T-cell (primary cell): ENCODE measurements at regions of chr16 and their contacts with region 1.

Region 1: GRCh38 chr16:56931271-56931891 is 561 bp upstream of the HERPUD1 start:
- DNase-seq: no peak
- ATAC-seq: peak in 3 of 4 experiments; percentile 8 to 14 (median 8)
- H3K4me3 ChIP-seq: peak overlapping the region; percentile 46 to 86
- H3K4me3 Mint-ChIP-seq: peak overlapping the region; percentile 96 to 98 (median 98)
- H3K27ac ChIP-seq: peak overlapping the region; percentile 92
- H3K27ac Mint-ChIP-seq: peak overlapping the region; percentile 92 to 97
- H3K4me1 ChIP-seq: peaks cover 12 to 27% of the 10 kb centered on the region in 2 experiments
- H3K4me1 Mint-ChIP-seq: peaks cover 30 to 39% (median 38%) of the 10 kb centered on the region in 3 donors
- H3K27me3 ChIP-seq: no peaks in the 10 kb centered on the region
- H3K27me3 Mint-ChIP-seq: no peaks in the 10 kb centered on the region

Region 2: DNA sequence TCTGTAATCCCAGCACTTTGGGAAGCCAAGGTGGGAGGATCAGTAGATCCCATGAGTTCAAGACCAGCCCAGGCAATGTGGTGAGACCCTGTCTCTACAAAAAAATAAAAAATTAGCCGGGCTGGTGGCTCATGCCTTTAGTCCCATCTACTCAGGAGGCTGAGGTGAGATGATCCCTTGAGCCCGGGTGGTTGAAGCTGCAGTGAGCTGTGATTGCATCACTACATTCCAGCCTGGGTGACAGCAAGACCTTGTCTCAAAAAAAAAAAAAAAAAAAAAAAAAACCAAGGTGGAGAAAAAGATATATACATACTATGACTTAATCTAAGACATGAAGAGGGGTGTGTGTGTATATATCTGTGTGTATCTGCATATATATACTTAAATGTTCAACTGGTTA is 438.3 kb before region 1 on chr16:
- CTCF ChIA-PET with region 1: no interaction called
- POLR2A ChIA-PET with region 1: interaction called in 1 of 2 experiments, 13 read pairs
- DNase-seq: no peak
- ATAC-seq: no peak
- H3K4me3 ChIP-seq: no peak overlapping the region
- H3K4me3 Mint-ChIP-seq: no peak overlapping the region
- H3K27ac ChIP-seq: no peak overlapping the region
- H3K27ac Mint-ChIP-seq: no peak overlapping the region
- H3K4me1 ChIP-seq: no peaks in the 10 kb centered on the region
- H3K4me1 Mint-ChIP-seq: no peaks in the 10 kb centered on the region
- H3K27me3 ChIP-seq: no peaks in the 10 kb centered on the region
- H3K27me3 Mint-ChIP-seq: no peaks in the 10 kb centered on the region

Region 3: GRCh38 chr16:56944954-56945839 is 13.8 kb after region 1 on chr16:
- CTCF ChIA-PET with region 1: no interaction called
- POLR2A ChIA-PET with region 1: interaction called, 6 to 13 read pairs
- DNase-seq: no peak
- ATAC-seq: no peak
- H3K4me3 ChIP-seq: no peak overlapping the region
- H3K4me3 Mint-ChIP-seq: no peak overlapping the region
- H3K27ac ChIP-seq: peak overlapping the region; percentile 2
- H3K27ac Mint-ChIP-seq: peak overlapping the region; percentile 37 to 49
- H3K4me1 ChIP-seq: peaks cover 0 to 3% of the 10 kb centered on the region in 2 experiments
- H3K4me1 Mint-ChIP-seq: peaks cover 8 to 17% (median 9%) of the 10 kb centered on the region in 3 donors
- H3K27me3 ChIP-seq: no peaks in the 10 kb centered on the region
- H3K27me3 Mint-ChIP-seq: no peaks in the 10 kb centered on the region

Region 4: DNA sequence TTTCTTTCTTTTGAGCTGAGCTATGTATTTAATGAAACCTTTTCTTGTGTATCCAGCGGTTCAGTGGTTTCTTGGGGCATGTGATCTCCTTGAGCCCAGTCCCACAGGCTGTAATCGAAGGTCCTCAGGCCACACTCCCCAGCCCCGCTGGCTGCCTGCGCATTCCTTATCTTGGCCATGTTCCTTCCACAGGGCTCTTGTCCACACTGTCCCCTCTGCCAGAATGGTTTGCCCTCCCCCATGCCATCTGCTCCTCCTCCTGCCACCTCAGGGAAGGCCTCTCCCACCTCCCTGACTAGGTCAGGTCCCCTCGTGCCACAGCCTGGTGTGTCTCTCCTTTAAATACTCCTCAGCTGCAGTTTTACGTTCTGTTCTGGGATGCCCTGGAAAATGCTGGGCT is 45.8 kb after region 1 on chr16:
- CTCF ChIA-PET with region 1: no interaction called
- POLR2A ChIA-PET with region 1: no interaction called
- DNase-seq: no peak
- ATAC-seq: no peak
- H3K4me3 ChIP-seq: no peak overlapping the region
- H3K4me3 Mint-ChIP-seq: no peak overlapping the region
- H3K27ac ChIP-seq: no peak overlapping the region
- H3K27ac Mint-ChIP-seq: peak overlapping the region in 1 of 2 donors; percentile 44
- H3K4me1 ChIP-seq: peaks cover 14 to 48% of the 10 kb centered on the region in 2 experiments
- H3K4me1 Mint-ChIP-seq: peaks cover 65 to 73% (median 70%) of the 10 kb centered on the region in 3 donors
- H3K27me3 ChIP-seq: no peaks in the 10 kb centered on the region
- H3K27me3 Mint-ChIP-seq: no peaks in the 10 kb centered on the region

Region 5: DNA sequence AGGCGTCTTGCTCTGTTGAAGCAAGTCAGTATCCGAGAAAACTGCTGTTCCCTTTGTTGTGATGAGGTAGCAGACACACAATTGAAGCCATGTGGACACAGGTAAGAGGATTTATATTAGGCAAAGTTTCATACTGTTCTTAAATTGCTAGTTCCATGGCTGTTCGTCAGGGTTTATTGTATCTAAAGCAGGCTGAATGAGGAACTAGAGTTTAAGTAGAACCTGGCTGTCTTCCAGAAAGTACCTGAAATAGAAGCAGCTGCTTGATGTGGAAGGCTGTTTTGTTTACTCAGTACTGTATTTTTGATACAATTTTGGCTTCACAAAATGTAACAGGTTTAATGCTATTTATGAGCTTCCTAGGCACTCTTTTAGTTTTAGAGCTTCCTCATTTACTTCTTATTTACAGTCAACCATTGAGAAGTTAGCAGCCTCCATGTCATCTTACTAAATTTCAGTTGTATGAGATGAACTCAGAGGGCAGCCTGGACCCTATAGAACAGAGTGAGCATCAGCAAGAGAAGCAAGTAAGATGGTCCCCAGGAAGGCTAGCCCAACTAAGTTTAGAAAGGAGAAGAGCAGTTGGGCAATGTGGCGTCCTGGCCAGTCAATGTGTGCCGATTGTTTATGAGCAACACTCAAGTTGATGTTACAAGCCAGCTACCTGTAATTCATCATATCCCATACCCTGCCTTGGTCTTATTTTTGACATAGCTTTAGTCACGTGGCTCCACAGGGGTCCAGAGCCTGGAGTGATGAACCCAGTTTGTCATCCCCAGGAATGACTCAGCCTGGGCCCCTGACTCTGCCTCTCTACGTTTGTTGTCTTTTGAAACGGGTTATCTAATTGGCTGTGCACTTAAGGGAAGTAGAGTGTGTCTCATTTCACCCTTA is 304.0 kb after region 1 on chr16:
- CTCF ChIA-PET with region 1: no interaction called
- POLR2A ChIA-PET with region 1: no interaction called
- DNase-seq: no peak
- ATAC-seq: no peak
- H3K4me3 ChIP-seq: no peak overlapping the region
- H3K4me3 Mint-ChIP-seq: no peak overlapping the region
- H3K27ac ChIP-seq: no peak overlapping the region
- H3K27ac Mint-ChIP-seq: peak overlapping the region in 1 of 2 donors; percentile 28
- H3K4me1 ChIP-seq: no peaks in the 10 kb centered on the region
- H3K4me1 Mint-ChIP-seq: peaks cover 0 to 5% (median 0%) of the 10 kb centered on the region in 3 donors
- H3K27me3 ChIP-seq: no peaks in the 10 kb centered on the region
- H3K27me3 Mint-ChIP-seq: no peaks in the 10 kb centered on the region

Region 6: GRCh38 chr16:57680832-57681375 is 749.5 kb after region 1 on chr16:
- CTCF ChIA-PET with region 1: no interaction called
- POLR2A ChIA-PET with region 1: no interaction called
- DNase-seq: no peak
- ATAC-seq: no peak
- H3K4me3 ChIP-seq: no peak overlapping the region
- H3K4me3 Mint-ChIP-seq: no peak overlapping the region
- H3K27ac ChIP-seq: no peak overlapping the region
- H3K27ac Mint-ChIP-seq: no peak overlapping the region
- H3K4me1 ChIP-seq: no peaks in the 10 kb centered on the region
- H3K4me1 Mint-ChIP-seq: peaks cover 0 to 4% (median 0%) of the 10 kb centered on the region in 3 donors
- H3K27me3 ChIP-seq: peaks cover 0 to 10% of the 10 kb centered on the region in 2 experiments
- H3K27me3 Mint-ChIP-seq: no peaks in the 10 kb centered on the region